ENCODE measurements at regions of chr13 and their contacts with region 1.

Region 1: DNA sequence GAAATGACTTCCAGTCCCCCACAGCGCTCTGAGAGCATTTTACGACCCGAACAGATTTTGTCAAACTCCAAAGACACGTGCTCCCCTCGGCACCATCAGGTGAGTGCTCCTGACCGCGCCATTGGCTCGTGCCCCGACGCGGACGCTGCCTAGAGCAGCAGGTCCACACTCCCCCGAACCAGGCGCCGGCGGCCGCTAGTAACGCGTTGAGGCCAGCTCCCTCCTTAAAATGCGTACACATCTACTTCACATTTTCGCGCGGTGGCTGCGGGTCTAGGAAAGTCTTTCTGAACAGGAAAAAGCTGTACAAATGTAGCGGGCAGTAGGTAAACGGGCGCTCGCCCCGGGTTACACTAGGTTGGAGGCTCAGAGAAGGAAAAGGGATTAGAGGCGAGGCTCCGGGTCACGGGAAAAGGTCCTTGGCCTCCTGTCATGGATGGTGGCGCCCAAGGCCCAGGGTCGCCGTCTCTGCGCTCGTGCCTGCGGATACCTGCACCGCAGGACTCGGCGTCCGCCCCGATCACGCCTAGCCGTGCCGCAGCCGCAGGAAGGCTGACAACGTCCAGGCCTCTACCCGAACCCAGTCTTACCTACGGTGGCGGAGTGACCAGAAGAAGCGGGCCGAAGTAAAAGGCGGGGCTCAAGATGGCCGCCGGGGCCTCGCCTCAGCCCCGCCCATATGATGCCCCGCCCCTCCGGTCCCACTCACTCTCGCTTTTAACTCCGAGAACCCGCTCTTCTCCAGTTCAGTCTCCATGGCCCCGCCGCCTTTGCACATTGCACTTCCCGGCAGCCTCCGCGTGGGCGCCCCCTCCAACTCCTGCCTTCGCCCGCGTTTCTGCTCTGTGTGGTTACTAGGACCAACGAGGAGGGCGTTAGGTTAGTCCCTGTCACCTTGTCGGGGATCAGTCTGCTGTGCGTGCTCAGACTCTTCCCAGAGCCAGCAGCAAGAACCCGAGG is at the start of gene ESD:
- DNase-seq: peak; percentile 91 to 99
- H3K4me3 ChIP-seq: peak within 1 kb of the TSS; percentile 74
- CTCF ChIP-seq: no peak
- POLR2A ChIP-seq: peak in 1 of 2 donors; percentile 28
- total RNA-seq, gene ESD: 63.7 to 84.5 (median 76.1) TPM

Region 2: DNA sequence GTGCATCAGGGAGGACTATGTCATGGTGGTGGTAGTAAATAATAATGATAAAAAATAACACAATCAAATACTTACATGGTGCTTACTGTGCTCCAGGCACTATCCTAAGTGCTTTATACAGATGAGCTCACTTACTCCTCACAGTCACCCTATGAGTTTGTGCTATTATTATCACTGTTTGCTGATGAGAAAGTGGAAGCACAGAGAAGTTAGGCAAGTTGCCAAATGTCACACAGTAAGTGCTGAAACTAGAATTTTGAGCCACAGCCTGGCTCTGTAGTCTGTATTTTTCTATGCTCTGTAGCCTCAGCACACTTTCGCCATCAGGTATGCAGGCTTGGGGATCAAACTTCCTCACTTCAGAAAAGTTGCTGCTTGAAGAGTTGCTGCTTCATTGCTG is 53.4 kb after region 1 on chr13:
- intact Hi-C with region 1: no loop called
- DNase-seq: no peak
- H3K4me3 ChIP-seq: no peak overlapping the region
- CTCF ChIP-seq: no peak
- POLR2A ChIP-seq: no peak

Region 3: GRCh38 chr13:48037346-48038173 is 1240.8 kb after region 1 on chr13 and contains the start of gene NUDT15:
- intact Hi-C with region 1: loop called (anchors 10 kb)
- DNase-seq: peak; percentile 89 to 98
- H3K4me3 ChIP-seq: peak within 1 kb of the TSS; percentile 43
- CTCF ChIP-seq: peak in 1 of 3 donors; percentile 98
- POLR2A ChIP-seq: no peak
- total RNA-seq, gene NUDT15: 6.8 to 13.3 (median 10.5) TPM

Measured in lower leg skin (tissue), 4 donors.